BJ (cell line): ENCODE measurements at regions of chr11 and their contacts with region 1.

Region 1: DNA sequence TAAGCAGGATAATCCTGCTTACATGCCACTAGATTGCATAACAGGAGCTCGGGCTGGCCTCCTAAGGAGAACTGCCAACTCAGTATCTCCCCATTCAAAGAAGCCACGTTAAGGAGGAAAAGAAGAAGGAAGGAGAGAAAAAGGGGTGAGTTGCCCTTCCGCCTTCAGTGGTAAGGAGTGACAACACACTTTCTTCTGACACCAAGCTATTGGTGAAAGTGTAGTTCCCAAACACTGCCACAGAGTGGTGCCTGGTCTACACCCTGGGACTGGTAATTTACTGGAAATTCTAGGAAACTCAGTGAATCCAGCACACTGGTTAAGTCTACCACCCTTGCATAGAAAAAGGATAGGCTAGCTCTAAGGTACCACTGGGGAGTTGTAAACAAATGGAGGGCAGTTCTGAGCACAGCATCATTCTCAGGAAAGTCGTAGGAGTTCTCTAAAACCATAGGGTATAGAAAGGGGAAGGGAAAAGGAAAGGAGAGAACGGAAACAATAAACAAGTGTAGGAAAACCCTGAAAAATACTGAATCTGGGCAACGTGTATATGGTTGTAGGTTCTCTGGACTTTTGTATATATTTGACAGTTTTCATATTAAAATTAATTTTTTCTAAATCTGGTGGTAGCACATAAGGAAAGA is 58.2 kb downstream of the RRAS2 start:
- DNase-seq: no peak
- H3K4me3 ChIP-seq: no peak overlapping the region
- H3K27me3 ChIP-seq: no peaks in the 10 kb centered on the region
- CTCF ChIP-seq: peak; percentile 79

Region 2: DNA sequence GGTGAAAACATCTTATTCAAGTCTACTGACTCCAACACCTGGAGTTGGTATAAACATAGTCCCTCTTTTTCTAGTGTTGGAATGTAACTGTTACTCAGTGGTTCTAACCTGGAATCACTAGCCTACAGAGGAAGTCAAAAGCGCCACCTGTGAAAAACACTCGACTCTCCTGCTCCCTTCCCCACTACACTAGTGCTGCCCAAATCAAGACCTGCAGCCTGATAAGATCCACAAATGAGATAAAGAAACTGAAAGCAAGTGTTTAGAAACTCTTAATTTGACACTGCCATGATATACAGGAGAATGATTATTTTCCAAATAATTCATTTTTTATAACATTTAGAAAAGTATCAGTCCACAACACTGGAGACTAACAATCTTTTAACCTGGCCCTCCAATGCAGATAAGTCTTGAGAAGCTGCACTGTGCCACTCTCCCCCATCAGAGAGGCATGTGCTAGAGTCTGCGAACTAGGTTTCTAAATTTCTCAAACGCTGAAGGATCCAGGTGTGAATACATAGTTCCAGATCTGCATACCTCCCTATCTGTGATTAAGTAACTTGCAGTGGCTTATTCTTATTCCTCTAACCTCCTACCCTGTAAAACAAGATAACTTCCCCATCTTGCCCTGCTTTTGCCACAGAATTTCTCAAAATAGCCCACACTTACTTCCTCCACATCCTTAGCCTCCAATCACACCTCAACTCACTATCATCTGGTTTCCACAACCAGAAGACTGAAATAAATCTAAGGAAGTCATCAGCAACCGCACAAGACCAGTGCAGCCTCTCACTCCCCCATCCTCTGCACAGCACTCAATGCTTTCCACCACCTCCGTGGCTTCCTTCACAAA is 29.9 kb before region 1 on chr11:
- CTCF ChIA-PET with region 1: no interaction called
- POLR2A ChIA-PET with region 1: no interaction called
- DNase-seq: no peak
- H3K4me3 ChIP-seq: no peak overlapping the region
- H3K27me3 ChIP-seq: no peaks in the 10 kb centered on the region
- CTCF ChIP-seq: no peak

Region 3: GRCh38 chr11:14463623-14464022 is 162.8 kb after region 1 on chr11:
- CTCF ChIA-PET with region 1: interaction called, 12 read pairs
- POLR2A ChIA-PET with region 1: no interaction called
- DNase-seq: no peak
- H3K4me3 ChIP-seq: no peak overlapping the region
- H3K27me3 ChIP-seq: no peaks in the 10 kb centered on the region
- CTCF ChIP-seq: no peak